CD8-positive, alpha-beta T cell (primary cell): ENCODE measurements at regions of chr7 and their contacts with region 1.

Region 1: GRCh38 chr7:37259319-37259821 is 189.3 kb downstream of the ELMO1 start:
- DNase-seq: no peak
- ATAC-seq: no peak
- H3K4me3 ChIP-seq: no peak overlapping the region
- H3K4me3 Mint-ChIP-seq: no peak overlapping the region
- H3K27ac ChIP-seq: no peak overlapping the region
- H3K27ac Mint-ChIP-seq: peak overlapping the region; percentile 5
- H3K4me1 ChIP-seq: no peaks in the 10 kb centered on the region
- H3K4me1 Mint-ChIP-seq: peaks cover 10% of the 10 kb centered on the region
- H3K27me3 ChIP-seq: no peaks in the 10 kb centered on the region
- H3K27me3 Mint-ChIP-seq: no peaks in the 10 kb centered on the region
- CTCF ChIP-seq: no peak

Region 2: GRCh38 chr7:37273891-37274290 is 14.5 kb after region 1 on chr7:
- CTCF ChIA-PET with region 1: no interaction called
- POLR2A ChIA-PET with region 1: no interaction called
- intact Hi-C with region 1: loop called in 1 of 2 experiments (anchors 2 kb)
- DNase-seq: no peak
- ATAC-seq: no peak
- H3K4me3 ChIP-seq: no peak overlapping the region
- H3K4me3 Mint-ChIP-seq: no peak overlapping the region
- H3K27ac ChIP-seq: no peak overlapping the region
- H3K27ac Mint-ChIP-seq: no peak overlapping the region
- H3K4me1 ChIP-seq: no peaks in the 10 kb centered on the region
- H3K4me1 Mint-ChIP-seq: peaks cover 35% of the 10 kb centered on the region
- H3K27me3 ChIP-seq: no peaks in the 10 kb centered on the region
- H3K27me3 Mint-ChIP-seq: no peaks in the 10 kb centered on the region
- CTCF ChIP-seq: no peak